ENCODE measurements at regions of chr17 and their contacts with region 1.

Region 1: DNA sequence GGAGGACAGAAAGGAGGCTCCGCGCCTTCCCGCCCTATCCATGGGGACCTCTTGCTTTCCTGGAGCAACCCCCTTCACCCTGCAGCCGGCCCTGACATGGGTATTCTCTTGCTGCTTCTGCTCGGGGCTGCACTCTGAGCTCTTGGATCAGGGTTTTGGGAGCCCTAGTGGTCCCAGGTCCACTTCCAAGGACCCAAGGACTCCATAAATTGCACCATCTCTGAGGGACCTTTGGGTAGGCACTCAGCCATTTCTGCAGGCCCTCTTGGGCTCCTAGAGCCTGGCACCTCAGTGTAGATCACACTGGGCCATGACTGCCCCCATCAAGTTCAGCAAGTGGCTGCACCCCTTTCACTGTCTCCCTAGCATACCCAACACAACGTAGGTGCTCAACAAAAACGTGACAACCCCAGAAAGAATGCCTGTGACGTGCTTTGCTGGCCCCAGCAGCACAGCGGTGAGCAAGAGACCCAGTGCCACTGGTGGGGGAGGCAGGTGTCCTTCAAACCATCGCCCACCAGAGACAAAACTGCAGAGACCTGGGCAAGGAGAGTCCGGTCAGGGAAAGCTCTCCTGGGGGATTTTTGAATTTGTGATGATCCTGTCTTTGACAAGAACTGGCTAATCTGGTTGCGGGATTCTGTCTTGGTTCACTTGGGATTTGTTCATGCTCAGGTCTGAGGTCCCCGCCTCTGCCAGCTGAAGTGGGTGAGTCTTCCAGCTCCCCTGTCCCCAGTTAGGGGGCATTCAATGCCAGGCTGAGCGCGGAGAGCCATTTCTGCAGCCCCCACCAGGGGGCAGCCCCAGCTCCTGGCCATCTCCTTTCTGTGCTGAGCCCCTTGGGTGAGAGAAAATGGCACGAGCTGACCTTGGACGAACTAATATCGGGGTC is 2.5 kb upstream of the RAB11FIP4 start:
- DNase-seq: peak; percentile 68
- ATAC-seq: peak; percentile 51
- H3K4me3 Mint-ChIP-seq: peak overlapping the region; percentile 76; the same call in 1 of the 2 replicates
- H3K27ac Mint-ChIP-seq: no peak overlapping the region
- H3K4me1 Mint-ChIP-seq: peaks cover 14% of the 10 kb centered on the region
- H3K27me3 Mint-ChIP-seq: peaks cover 40% of the 10 kb centered on the region
- CTCF ChIP-seq: peak; percentile 67

Region 2: GRCh38 chr17:31349454-31349853 is 39.6 kb before region 1 on chr17:
- CTCF ChIA-PET with region 1: no interaction called
- POLR2A ChIA-PET with region 1: no interaction called
- DNase-seq: no peak
- ATAC-seq: no peak
- H3K4me3 Mint-ChIP-seq: no peak overlapping the region
- H3K27ac Mint-ChIP-seq: no peak overlapping the region
- H3K4me1 Mint-ChIP-seq: no peaks in the 10 kb centered on the region
- H3K27me3 Mint-ChIP-seq: no peaks in the 10 kb centered on the region
- CTCF ChIP-seq: no peak

Region 3: DNA sequence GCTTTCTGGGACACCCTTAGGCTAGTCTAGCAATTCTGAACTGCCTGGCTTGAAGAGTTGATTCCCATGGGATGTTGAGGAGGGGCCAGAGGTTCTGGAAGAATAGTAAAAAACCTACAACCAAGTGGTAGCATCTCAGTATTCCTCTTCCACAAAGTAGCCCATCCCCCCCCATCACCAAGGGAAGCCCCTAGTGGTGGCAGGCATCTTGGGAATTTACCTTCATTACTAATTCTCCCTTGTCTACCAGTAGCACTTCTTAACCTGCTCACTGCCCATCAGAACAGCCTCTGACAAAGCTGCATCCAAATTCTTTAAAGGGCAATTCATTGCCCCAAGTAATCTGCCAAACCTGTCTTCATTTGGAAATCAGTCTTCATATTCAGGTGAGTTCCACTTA is 10.4 kb before region 1 on chr17:
- CTCF ChIA-PET with region 1: interaction called, 42 read pairs
- POLR2A ChIA-PET with region 1: no interaction called
- DNase-seq: no peak
- ATAC-seq: peak; percentile 80
- H3K4me3 Mint-ChIP-seq: no peak overlapping the region
- H3K27ac Mint-ChIP-seq: no peak overlapping the region; the same call in 1 of the 2 replicates
- H3K4me1 Mint-ChIP-seq: peaks cover 20% of the 10 kb centered on the region
- H3K27me3 Mint-ChIP-seq: no peaks in the 10 kb centered on the region
- CTCF ChIP-seq: no peak

Region 4: DNA sequence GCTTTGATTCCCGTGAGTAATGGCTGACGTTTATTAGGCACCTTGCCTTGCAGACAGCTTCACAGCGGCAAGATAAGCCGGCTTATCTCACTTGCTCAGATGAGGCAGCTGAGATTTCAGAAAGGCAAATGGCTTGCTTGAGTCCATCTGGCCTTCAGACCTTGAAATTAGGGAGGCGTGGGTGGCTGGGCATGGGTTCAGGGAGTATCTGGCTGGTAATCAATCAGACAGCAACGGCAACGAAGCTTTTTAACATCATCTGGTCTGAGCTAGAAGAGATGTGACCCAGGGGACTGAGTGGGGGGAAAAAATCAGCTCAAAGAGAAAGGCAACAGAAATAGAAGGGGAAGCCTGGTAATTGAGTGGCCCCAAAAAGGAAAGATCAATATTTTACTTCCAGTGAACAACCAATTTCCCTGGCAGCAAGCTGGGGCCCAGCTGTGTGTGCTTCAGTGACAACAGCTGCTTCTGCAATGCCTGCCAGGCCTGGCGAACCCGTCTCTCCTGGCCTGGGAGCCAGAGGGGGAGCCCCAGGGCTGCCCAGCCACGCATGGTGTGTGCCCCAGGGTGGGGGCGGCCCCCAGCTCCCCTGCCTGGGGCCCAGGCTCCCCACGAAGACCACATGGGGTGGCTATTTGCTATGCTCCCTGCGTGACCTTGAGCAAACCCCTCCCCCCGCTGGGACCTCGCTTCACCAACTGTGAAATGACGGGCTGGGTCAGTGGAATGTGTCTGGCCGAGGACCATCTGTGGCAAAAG is 36.4 kb after region 1 on chr17:
- CTCF ChIA-PET with region 1: interaction called, 15 read pairs
- POLR2A ChIA-PET with region 1: interaction called, 3 read pairs
- DNase-seq: no peak
- ATAC-seq: peak; percentile 72
- H3K4me3 Mint-ChIP-seq: no peak overlapping the region
- H3K27ac Mint-ChIP-seq: peak overlapping the region; percentile 55
- H3K4me1 Mint-ChIP-seq: peaks cover 12% of the 10 kb centered on the region
- H3K27me3 Mint-ChIP-seq: no peaks in the 10 kb centered on the region; the same call in 1 of the 2 replicates
- CTCF ChIP-seq: no peak

Region 5: GRCh38 chr17:31456821-31457220 is 67.8 kb after region 1 on chr17:
- CTCF ChIA-PET with region 1: no interaction called
- POLR2A ChIA-PET with region 1: no interaction called
- DNase-seq: no peak
- ATAC-seq: no peak
- H3K4me3 Mint-ChIP-seq: no peak overlapping the region
- H3K27ac Mint-ChIP-seq: peak overlapping the region; percentile 50; the same call in 1 of the 2 replicates
- H3K4me1 Mint-ChIP-seq: peaks cover 23% of the 10 kb centered on the region
- H3K27me3 Mint-ChIP-seq: no peaks in the 10 kb centered on the region
- CTCF ChIP-seq: no peak

Region 6: GRCh38 chr17:31509095-31509804 is 120.2 kb after region 1 on chr17:
- CTCF ChIA-PET with region 1: interaction called, 10 read pairs
- POLR2A ChIA-PET with region 1: no interaction called
- DNase-seq: no peak
- ATAC-seq: no peak
- H3K4me3 Mint-ChIP-seq: no peak overlapping the region
- H3K27ac Mint-ChIP-seq: peak overlapping the region; percentile 92
- H3K4me1 Mint-ChIP-seq: peaks cover 18% of the 10 kb centered on the region
- H3K27me3 Mint-ChIP-seq: no peaks in the 10 kb centered on the region
- CTCF ChIP-seq: no peak

Region 7: GRCh38 chr17:31533546-31534155 is 144.6 kb after region 1 on chr17:
- CTCF ChIA-PET with region 1: interaction called, 21 read pairs
- POLR2A ChIA-PET with region 1: no interaction called
- DNase-seq: peak; percentile 72
- ATAC-seq: peak; percentile 74
- H3K4me3 Mint-ChIP-seq: no peak overlapping the region
- H3K27ac Mint-ChIP-seq: no peak overlapping the region
- H3K4me1 Mint-ChIP-seq: peaks cover 3% of the 10 kb centered on the region; the same call in 1 of the 2 replicates
- H3K27me3 Mint-ChIP-seq: no peaks in the 10 kb centered on the region
- CTCF ChIP-seq: 0 out of 2 replicates have a peak, but pooled peaks have one; percentile 36

Region 8: DNA sequence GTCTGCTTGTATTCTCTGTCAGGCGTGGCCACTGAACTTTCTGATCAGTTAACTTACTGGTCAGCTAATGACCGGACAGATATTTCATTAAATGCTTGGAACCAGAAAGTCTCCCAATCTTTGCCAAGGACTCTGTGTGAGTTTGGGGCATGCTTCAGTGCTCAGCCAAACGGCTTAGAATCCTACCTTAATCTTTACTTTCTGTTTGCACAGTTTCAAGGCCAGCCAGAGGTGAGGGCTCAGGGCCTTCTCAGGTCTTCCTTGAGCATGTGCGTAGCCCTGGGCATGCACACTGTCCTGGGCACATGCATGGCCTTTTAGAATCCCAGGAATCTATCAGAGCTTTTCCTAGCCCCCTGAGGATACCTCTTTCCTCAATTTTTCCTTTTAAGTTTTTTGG is 232.6 kb after region 1 on chr17:
- CTCF ChIA-PET with region 1: no interaction called
- POLR2A ChIA-PET with region 1: no interaction called
- DNase-seq: no peak
- ATAC-seq: no peak
- H3K4me3 Mint-ChIP-seq: no peak overlapping the region
- H3K27ac Mint-ChIP-seq: no peak overlapping the region
- H3K4me1 Mint-ChIP-seq: no peaks in the 10 kb centered on the region
- H3K27me3 Mint-ChIP-seq: no peaks in the 10 kb centered on the region; the same call in 1 of the 2 replicates
- CTCF ChIP-seq: no peak